Heart right ventricle (tissue), 16 donors: ENCODE measurements at regions of chr16 and their contacts with region 1.

Region 1: GRCh38 chr16:4548124-4548523 is 8.0 kb upstream of the C16orf96 start:
- DNase-seq: no peak
- ATAC-seq: no peak
- H3K4me3 ChIP-seq: no peak overlapping the region
- H3K27ac ChIP-seq: no peak overlapping the region
- H3K4me1 ChIP-seq: peaks cover 0 to 5% (median 0%) of the 10 kb centered on the region in 9 donors
- H3K27me3 ChIP-seq: no peaks in the 10 kb centered on the region
- CTCF ChIP-seq: no peak

Region 2: GRCh38 chr16:4506450-4506849 is 41.7 kb before region 1 on chr16:
- intact Hi-C with region 1: loop called in 7 of 10 experiments (anchors 1 to 5 kb)
- DNase-seq: peak in 1 of 2 donors; percentile 67
- ATAC-seq: peak; percentile 58 to 87 (median 77)
- H3K4me3 ChIP-seq: no peak overlapping the region
- H3K27ac ChIP-seq: peak overlapping the region in 4 of 10 donors; percentile 3 to 93 (median 27)
- H3K4me1 ChIP-seq: peaks cover 8 to 63% (median 40%) of the 10 kb centered on the region in 9 donors
- H3K27me3 ChIP-seq: no peaks in the 10 kb centered on the region
- CTCF ChIP-seq: peak; percentile 65 to 85 (median 79)

Region 3: GRCh38 chr16:4511441-4512082 is 36.6 kb before region 1 on chr16:
- intact Hi-C with region 1: loop called in 8 of 10 experiments (anchors 1 to 5 kb)
- DNase-seq: peak; percentile 45 to 54
- ATAC-seq: peak; percentile 45 to 66 (median 58)
- H3K4me3 ChIP-seq: no peak overlapping the region
- H3K27ac ChIP-seq: peak overlapping the region; percentile 34 to 87 (median 56)
- H3K4me1 ChIP-seq: peaks cover 26 to 64% (median 55%) of the 10 kb centered on the region in 9 donors
- H3K27me3 ChIP-seq: no peaks in the 10 kb centered on the region
- CTCF ChIP-seq: peak; percentile 17 to 64 (median 58)

Region 4: GRCh38 chr16:4517812-4518680 is 30.1 kb before region 1 on chr16:
- intact Hi-C with region 1: loop called in 2 of 10 experiments (anchors 2 to 5 kb)
- DNase-seq: no peak
- ATAC-seq: peak in 3 of 8 donors; percentile 8 to 24 (median 19)
- H3K4me3 ChIP-seq: no peak overlapping the region
- H3K27ac ChIP-seq: peak overlapping the region in 1 of 10 donors; percentile 5
- H3K4me1 ChIP-seq: peaks cover 22 to 65% (median 50%) of the 10 kb centered on the region in 9 donors
- H3K27me3 ChIP-seq: no peaks in the 10 kb centered on the region
- CTCF ChIP-seq: peak; percentile 32 to 66 (median 56)